ENCODE measurements at regions of chr5 and their contacts with region 1.

Region 1: GRCh38 chr5:132238169-132238744 is 10.6 kb upstream of the P4HA2 start:
- DNase-seq: peak; percentile 94
- ATAC-seq: peak; percentile 98
- H3K4me3 Mint-ChIP-seq: no peak overlapping the region
- H3K27ac Mint-ChIP-seq: no peak overlapping the region
- H3K4me1 Mint-ChIP-seq: no peaks in the 10 kb centered on the region
- H3K27me3 Mint-ChIP-seq: no peaks in the 10 kb centered on the region
- CTCF ChIP-seq: peak; percentile 79

Region 2: GRCh38 chr5:132064738-132065331 is 173.4 kb before region 1 on chr5:
- CTCF ChIA-PET with region 1: interaction called, 17 read pairs
- POLR2A ChIA-PET with region 1: no interaction called
- intact Hi-C with region 1: loop called (anchors 10 kb)
- DNase-seq: peak; percentile 93
- ATAC-seq: peak; percentile 78
- H3K4me3 Mint-ChIP-seq: no peak overlapping the region
- H3K27ac Mint-ChIP-seq: peak overlapping the region; percentile 6
- H3K4me1 Mint-ChIP-seq: peaks cover 34% of the 10 kb centered on the region
- H3K27me3 Mint-ChIP-seq: no peaks in the 10 kb centered on the region
- CTCF ChIP-seq: peak; percentile 92

Region 3: GRCh38 chr5:132147663-132148062 is 90.6 kb before region 1 on chr5:
- CTCF ChIA-PET with region 1: no interaction called
- POLR2A ChIA-PET with region 1: no interaction called
- intact Hi-C with region 1: no loop called
- DNase-seq: no peak
- ATAC-seq: no peak
- H3K4me3 Mint-ChIP-seq: no peak overlapping the region
- H3K27ac Mint-ChIP-seq: no peak overlapping the region
- H3K4me1 Mint-ChIP-seq: peaks cover 5% of the 10 kb centered on the region
- H3K27me3 Mint-ChIP-seq: peaks cover 6% of the 10 kb centered on the region
- CTCF ChIP-seq: no peak

Region 4: DNA sequence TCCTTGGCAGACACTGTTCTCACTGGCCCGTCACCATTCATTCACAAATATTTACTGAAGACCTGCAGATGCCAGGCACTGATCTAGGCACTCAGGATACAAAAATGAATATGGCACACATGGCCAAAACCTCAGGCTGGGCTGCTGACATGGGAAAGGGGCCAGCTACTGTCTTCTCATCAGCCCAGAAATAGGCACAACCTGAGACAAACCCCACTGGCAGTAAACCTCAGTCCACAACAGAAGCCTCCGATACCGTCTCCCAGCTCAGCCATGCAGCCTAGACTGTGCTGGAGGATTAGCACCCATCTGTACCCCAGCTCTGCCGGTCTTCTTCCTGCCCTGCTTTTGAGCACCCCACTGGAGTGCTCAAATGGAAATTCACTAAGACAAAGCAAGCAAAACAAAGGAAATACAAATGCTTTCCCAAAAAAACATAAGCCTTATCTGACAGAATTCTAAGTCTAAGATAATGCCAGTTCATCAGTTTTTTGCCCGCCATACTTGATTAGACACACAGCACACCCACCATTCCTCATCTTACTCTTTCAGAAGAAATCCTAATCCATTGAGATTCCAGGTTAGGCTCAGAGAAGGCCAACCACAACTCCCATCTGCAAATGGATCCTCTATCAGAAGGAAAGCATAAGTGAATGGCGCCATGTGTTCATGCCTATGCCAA is 18.8 kb before region 1 on chr5:
- CTCF ChIA-PET with region 1: interaction called, 65 read pairs
- POLR2A ChIA-PET with region 1: no interaction called
- intact Hi-C with region 1: no loop called
- DNase-seq: no peak
- ATAC-seq: no peak
- H3K4me3 Mint-ChIP-seq: no peak overlapping the region
- H3K27ac Mint-ChIP-seq: no peak overlapping the region
- H3K4me1 Mint-ChIP-seq: no peaks in the 10 kb centered on the region
- H3K27me3 Mint-ChIP-seq: no peaks in the 10 kb centered on the region
- CTCF ChIP-seq: no peak

Region 5: DNA sequence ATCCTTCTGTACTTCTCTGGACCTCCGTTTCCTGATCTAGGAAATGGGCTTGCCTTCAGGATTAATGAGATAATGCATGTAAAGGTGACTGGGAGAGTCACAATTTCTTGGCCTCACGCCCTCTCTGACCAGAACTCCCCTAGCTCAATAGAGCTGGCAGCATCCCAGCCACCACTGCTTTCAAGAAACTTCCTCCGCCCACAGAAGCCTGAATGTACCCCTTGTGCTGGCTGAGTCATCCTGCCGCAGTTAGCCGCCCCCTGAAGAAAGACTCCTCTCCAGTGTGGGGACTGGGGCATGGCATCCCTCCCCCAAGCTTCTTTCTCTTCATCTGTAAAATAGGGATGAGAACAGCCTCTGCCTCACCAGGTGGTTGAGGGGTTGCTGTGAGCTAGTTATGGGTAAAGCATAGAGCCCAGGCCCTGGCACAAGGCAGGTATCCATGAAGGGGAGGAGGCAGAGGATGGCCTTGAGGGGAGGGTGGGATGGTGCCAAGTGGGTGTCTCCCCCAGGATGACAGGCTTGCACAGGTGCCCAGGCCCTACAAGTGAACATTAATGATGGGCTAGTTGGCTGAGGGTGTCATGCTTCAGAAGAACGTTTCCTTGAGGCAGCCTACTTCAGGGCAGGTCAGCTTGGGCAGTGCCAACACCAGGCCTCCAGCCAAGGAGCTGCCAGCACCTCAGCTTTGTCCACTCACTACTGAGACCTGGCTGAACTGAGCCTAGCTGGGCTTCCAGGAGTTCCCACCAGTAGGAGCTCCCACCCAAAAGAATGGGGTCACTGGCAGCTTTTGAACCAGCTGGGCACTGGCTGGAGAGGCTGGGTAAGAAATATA is 22.7 kb after region 1 on chr5:
- CTCF ChIA-PET with region 1: interaction called, 44 read pairs
- POLR2A ChIA-PET with region 1: interaction called, 3 read pairs
- intact Hi-C with region 1: no loop called
- DNase-seq: peak; percentile 88
- ATAC-seq: peak; percentile 85
- H3K4me3 Mint-ChIP-seq: peak overlapping the region; percentile 4
- H3K27ac Mint-ChIP-seq: peak overlapping the region; percentile 49
- H3K4me1 Mint-ChIP-seq: peaks cover 40% of the 10 kb centered on the region
- H3K27me3 Mint-ChIP-seq: peaks cover 11% of the 10 kb centered on the region
- CTCF ChIP-seq: no peak

Region 6: DNA sequence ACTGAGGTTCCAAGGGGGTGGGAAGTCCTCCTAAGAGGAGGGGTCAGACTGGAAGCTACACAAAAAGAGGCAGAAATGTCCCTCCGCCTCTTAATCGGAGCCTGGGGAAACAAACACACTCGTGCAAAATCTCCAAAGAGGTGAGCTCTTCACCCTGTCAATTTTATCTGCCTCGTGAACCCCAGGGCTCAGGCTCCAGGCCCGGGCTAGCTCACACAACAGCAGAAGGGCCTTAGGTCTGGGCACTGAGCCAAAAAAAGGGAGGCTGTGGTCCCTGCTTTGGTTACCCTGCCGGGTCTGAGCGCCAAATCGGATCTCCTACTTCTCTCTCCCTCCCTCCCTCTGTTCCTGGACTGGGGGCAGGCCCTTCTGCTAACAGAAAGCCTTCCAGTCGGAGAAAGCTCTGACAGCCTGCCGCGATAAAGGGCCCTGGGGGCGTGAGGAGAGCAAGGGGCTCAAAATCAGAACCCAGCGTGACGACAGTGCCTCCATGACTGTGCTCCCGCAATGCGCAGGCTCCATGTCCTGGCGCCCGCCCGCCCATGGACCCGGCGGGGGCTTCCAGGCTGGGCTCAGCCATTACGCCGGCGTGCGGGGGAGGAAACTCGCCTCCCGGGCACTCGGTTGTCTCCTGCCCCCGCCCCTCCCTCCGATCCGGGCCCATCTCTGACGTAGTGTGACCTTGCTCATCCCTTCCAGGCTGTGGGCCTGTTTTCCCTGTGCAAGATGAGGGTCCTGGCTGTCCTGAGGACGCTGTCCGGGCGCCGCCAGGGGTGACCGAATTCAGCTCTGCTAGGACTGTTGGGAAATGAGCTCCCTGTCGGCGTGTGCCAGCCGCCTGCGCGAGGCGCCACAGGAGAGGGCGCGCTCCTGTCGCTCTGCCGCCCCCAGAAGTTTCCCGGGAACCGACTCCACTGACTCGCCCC is 55.1 kb after region 1 on chr5:
- CTCF ChIA-PET with region 1: interaction called, 10 read pairs
- POLR2A ChIA-PET with region 1: interaction called, 3 read pairs
- intact Hi-C with region 1: no loop called
- DNase-seq: peak; percentile 92
- ATAC-seq: peak; percentile 54
- H3K4me3 Mint-ChIP-seq: peak overlapping the region; percentile 87
- H3K27ac Mint-ChIP-seq: peak overlapping the region; percentile 95
- H3K4me1 Mint-ChIP-seq: peaks cover 21% of the 10 kb centered on the region
- H3K27me3 Mint-ChIP-seq: peaks cover 8% of the 10 kb centered on the region
- CTCF ChIP-seq: no peak

Region 7: DNA sequence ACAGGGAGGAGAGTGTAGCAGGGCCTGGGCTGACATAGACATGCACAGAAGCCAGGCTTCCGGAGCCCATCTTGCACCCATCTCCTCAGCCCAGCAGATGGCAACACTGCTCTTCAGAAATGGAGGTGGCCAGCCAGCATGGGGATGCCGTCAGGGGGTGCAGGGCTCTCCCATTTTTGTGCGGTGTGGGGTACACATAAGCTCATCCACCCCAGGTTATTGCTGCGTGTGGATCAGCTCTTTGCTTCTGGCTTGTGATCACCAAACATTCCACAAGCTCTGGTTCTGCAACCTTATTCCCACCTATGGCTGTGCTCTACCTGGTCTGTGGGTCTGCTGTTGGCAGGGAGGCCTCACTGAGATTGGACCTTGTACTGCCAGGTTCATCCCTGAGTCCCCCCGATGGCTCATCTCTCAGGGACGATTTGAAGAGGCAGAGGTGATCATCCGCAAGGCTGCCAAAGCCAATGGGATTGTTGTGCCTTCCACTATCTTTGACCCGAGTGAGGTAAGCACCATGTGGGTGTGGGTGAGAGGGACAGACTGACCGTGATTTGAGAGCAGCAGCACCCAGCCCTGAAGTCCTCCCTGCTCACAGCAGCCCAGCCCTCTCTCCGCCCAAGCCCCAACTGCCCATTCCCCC is 148.5 kb after region 1 on chr5:
- CTCF ChIA-PET with region 1: interaction called, 10 read pairs
- POLR2A ChIA-PET with region 1: no interaction called
- intact Hi-C with region 1: no loop called
- DNase-seq: peak; percentile 87
- ATAC-seq: peak; percentile 92
- H3K4me3 Mint-ChIP-seq: no peak overlapping the region
- H3K27ac Mint-ChIP-seq: peak overlapping the region; percentile 25
- H3K4me1 Mint-ChIP-seq: peaks cover 40% of the 10 kb centered on the region
- H3K27me3 Mint-ChIP-seq: no peaks in the 10 kb centered on the region
- CTCF ChIP-seq: peak; percentile 91

Region 8: DNA sequence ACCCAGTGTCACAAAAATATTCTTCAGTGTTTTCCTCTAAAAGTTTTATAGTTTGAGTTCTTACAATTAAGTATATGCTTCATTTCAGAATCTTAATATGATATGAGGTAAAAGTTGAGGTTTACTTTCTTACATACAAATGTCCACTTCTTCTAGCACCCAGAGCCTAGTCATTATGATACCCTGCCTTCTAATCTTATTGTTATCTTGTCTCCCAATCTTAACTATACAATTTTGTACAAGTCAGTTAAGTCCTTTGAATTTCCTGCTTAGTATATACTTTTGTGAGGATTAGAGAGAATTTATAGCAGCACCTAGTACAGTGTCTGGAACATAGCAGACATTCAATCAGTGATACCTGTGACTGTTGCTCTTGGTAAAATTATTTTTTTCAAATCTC is 347.8 kb after region 1 on chr5:
- CTCF ChIA-PET with region 1: no interaction called
- POLR2A ChIA-PET with region 1: no interaction called
- intact Hi-C with region 1: no loop called
- DNase-seq: no peak
- ATAC-seq: no peak
- H3K4me3 Mint-ChIP-seq: no peak overlapping the region
- H3K27ac Mint-ChIP-seq: no peak overlapping the region
- H3K4me1 Mint-ChIP-seq: no peaks in the 10 kb centered on the region
- H3K27me3 Mint-ChIP-seq: no peaks in the 10 kb centered on the region
- CTCF ChIP-seq: no peak

Measured in activated CD8-positive, alpha-beta T cell treated with anti-CD3 and anti-CD28 coated beads for 36 hours (primary cell).